ENCODE measurements at regions of chr5 and their contacts with region 1.

Region 1: DNA sequence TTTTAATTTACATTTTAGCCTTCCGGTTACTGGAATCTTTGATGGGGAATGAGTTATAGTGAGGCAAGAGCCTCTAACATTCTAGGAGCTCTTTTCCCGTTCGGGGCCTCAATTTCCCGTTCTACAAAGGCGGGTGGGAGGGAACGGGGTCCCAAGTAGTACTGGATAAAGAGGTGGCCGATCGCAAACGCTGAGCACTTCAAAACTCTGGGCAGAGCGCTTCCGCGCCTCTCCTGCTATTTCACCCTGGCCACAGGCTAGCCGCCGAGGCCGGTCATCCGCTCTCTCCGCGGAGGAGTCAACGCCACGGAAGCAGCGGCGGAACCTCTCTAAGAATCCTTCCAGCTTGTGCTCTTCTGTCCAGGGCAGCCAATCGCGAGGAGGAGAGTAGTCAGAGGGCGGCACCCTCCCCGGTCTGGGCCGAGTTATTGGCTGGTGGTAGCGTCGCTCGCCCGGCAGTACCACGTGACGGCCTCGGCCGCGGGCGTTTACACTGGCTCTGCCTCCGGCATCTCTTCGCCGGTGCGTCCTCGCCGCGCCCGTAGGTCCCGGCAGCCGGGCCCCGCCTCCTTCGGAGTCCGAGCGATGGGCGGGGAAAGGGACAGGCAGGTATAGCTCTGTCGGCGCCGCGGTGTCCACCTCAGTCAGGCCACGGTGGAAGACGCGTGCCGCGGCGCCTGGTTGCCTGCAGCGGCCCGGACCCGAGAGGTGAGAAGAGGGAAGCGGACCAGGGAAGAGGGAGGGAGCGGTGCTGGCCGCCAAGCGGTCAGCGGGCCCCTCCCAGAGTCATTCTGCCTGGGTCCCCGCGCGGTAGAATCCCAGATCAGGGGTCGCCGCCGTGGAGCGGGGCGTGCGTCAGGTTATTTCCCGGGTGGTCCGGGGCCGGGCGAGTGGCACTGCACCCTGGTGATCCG is at the start of gene SLC26A2:
- DNase-seq: peak; percentile 93
- ATAC-seq: peak; percentile 95
- H3K4me3 ChIP-seq: peak within 1 kb of the TSS; percentile 71 to 83
- H3K27ac ChIP-seq: peak within 1 kb of the TSS; percentile 98
- H3K4me1 ChIP-seq: peaks cover 47% of the 10 kb centered on the region
- H3K27me3 ChIP-seq: no peaks in the 10 kb centered on the region
- CTCF ChIP-seq: no peak
- total RNA-seq, gene SLC26A2: 111 TPM

Region 2: DNA sequence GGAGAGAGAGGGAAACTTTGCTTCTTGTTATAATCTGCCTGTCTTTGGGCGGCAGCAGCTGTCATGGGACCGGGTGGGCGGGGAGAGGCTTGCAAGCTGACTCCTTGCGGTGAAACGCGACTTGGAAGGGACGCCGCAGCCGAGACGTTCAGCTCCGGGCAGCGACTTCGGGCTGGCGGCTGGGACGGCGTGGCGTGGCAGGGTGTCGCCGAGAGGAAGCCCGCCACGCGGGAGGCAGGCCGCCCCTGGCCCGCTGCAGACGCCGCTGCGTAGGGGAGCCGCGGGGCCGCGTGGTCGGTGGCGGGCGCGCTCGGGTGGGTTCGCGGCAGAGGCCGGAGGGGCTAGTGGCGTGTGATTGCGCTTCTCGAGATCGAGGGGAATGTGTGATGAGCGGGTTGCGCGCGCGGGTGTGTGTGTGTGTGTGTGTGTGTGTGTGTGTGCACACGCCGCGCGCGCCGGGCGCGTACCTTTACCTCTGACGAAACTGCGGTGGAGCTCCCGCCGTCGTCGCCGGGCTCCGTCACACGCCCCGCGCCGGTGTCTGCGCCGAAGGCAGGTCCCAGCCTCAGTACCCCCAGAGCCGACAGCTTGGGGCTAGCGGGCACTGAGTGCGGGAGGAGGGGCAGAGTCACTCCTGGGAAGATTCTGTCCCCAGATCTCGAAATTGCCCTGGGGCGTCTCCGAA is 228.7 kb before region 1 on chr5:
- CTCF ChIA-PET with region 1: interaction called, 10 read pairs
- POLR2A ChIA-PET with region 1: no interaction called
- in situ Hi-C with region 1: no loop called
- intact Hi-C with region 1: no loop called
- DNase-seq: peak; percentile 48
- ATAC-seq: peak; percentile 77
- H3K4me3 ChIP-seq: peak overlapping the region; percentile 76 to 81
- H3K27ac ChIP-seq: peak overlapping the region; percentile 68
- H3K4me1 ChIP-seq: peaks cover 9% of the 10 kb centered on the region; the same call in 1 of the 2 replicates
- H3K27me3 ChIP-seq: no peaks in the 10 kb centered on the region
- CTCF ChIP-seq: no peak

Region 3: GRCh38 chr5:149834246-149834855 is 126.2 kb before region 1 on chr5:
- CTCF ChIA-PET with region 1: interaction called, 14 read pairs
- POLR2A ChIA-PET with region 1: no interaction called
- in situ Hi-C with region 1: no loop called
- intact Hi-C with region 1: loop called (anchors 1 kb)
- DNase-seq: peak; percentile 69
- ATAC-seq: peak; percentile 77
- H3K4me3 ChIP-seq: no peak overlapping the region
- H3K27ac ChIP-seq: no peak overlapping the region
- H3K4me1 ChIP-seq: peaks cover 10% of the 10 kb centered on the region
- H3K27me3 ChIP-seq: no peaks in the 10 kb centered on the region
- CTCF ChIP-seq: peak; percentile 89

Region 4: DNA sequence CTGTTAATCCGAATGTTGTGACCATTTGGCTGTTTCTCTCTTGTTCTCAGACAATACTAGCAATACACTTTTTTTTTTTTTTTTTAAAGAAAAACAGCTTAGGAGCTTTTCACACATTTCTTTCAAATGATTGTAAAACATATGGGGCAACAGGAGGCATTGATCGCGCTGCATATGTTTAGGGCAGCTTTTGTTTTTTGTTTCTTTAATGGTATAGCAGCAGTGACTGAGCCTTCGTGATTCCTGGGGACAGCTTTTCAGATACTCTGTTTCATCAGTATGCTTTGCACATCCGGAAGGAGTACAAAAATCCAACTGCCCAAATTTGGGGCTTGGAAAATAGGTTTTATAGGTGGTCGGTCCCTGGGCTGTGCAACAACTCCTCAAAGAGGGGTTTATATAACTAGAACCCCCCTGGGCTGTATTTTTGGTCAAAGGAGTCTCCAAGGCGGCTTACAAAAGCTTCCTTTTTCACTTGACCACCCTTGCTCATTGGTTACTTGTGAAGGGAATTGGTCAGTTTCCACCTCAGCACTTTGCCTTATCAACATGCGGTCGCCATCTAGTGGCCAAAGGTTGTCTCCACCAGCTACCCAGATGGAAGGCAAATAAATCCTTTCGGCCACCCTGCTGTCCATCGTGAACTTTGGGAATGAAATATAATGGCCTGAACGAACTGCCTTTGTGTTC is 107.7 kb before region 1 on chr5:
- CTCF ChIA-PET with region 1: interaction called, 5 read pairs
- POLR2A ChIA-PET with region 1: no interaction called
- in situ Hi-C with region 1: no loop called
- intact Hi-C with region 1: loop called (anchors 1 kb)
- DNase-seq: peak; percentile 59
- ATAC-seq: peak; percentile 93
- H3K4me3 ChIP-seq: no peak overlapping the region
- H3K27ac ChIP-seq: peak overlapping the region; percentile 23; the same call in 1 of the 2 replicates
- H3K4me1 ChIP-seq: peaks cover 4% of the 10 kb centered on the region
- H3K27me3 ChIP-seq: no peaks in the 10 kb centered on the region
- CTCF ChIP-seq: peak; percentile 96

Region 5: GRCh38 chr5:149938791-149939358 is 21.7 kb before region 1 on chr5:
- CTCF ChIA-PET with region 1: interaction called, 11 read pairs
- POLR2A ChIA-PET with region 1: interaction called, 11 read pairs
- in situ Hi-C with region 1: no loop called
- intact Hi-C with region 1: no loop called
- DNase-seq: peak; percentile 97
- ATAC-seq: peak; percentile 84
- H3K4me3 ChIP-seq: peak overlapping the region in 1 of 2 experiments; percentile 2; a peak in 2 of 4 replicates
- H3K27ac ChIP-seq: peak overlapping the region; percentile 98
- H3K4me1 ChIP-seq: peaks cover 66% of the 10 kb centered on the region
- H3K27me3 ChIP-seq: no peaks in the 10 kb centered on the region
- CTCF ChIP-seq: no peak

Region 6: GRCh38 chr5:150009671-150010387 is 49.3 kb after region 1 on chr5:
- CTCF ChIA-PET with region 1: no interaction called
- POLR2A ChIA-PET with region 1: no interaction called
- in situ Hi-C with region 1: no loop called
- intact Hi-C with region 1: no loop called
- DNase-seq: no peak
- ATAC-seq: peak; percentile 54
- H3K4me3 ChIP-seq: no peak overlapping the region
- H3K27ac ChIP-seq: no peak overlapping the region
- H3K4me1 ChIP-seq: no peaks in the 10 kb centered on the region
- H3K27me3 ChIP-seq: no peaks in the 10 kb centered on the region
- CTCF ChIP-seq: no peak

Region 7: GRCh38 chr5:150234576-150235499 is 274.3 kb after region 1 on chr5:
- CTCF ChIA-PET with region 1: no interaction called
- POLR2A ChIA-PET with region 1: no interaction called
- in situ Hi-C with region 1: no loop called
- intact Hi-C with region 1: no loop called
- DNase-seq: no peak
- ATAC-seq: no peak
- H3K4me3 ChIP-seq: no peak overlapping the region
- H3K27ac ChIP-seq: no peak overlapping the region
- H3K4me1 ChIP-seq: no peaks in the 10 kb centered on the region
- H3K27me3 ChIP-seq: no peaks in the 10 kb centered on the region
- CTCF ChIP-seq: no peak

Measured in Panc1 (cell line).